Activated CD4-positive, alpha-beta T cell treated with anti-CD3 and anti-CD28 coated beads, Interleukin-2, amount 10 ng/mL, durations not matched to agents 24 days and 14 days (primary cell): ENCODE measurements at regions of chr12 and their contacts with region 1.

Region 1: DNA sequence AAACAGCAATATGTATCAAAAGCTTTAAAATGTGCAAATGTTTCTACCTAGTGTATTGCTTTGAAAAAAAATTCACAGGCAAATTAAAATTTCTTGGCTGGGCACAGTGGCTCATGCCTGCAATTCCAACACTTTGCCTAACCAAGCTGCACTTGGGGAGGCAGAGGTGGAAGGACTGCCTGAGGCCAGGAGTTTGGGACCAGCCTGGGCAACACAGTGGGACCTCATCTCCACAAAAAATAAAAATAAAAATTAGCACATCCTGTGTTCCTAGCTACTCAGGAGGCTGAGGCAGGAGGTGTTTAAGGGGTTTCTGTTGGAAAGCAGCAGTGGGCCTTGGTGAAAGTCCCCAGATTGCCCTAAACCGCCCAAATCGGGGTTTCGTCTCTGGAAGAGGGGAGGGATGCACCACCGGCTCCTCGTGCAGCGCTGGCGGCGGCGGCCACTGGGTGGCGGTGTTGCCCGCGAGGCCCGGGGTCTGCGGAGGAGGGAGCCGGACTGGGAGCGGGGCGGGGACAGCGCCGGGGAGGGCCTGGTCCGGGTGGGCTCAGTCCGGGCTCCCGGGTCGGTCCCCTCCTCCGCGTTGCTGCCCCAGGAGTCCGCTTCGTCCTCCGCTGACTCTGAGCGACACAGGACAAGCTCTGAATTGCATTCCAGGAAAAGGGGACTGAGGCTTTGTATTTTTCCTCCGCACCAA is 265.6 kb downstream of the AACS start:
- DNase-seq: peak; percentile 87
- H3K4me3 Mint-ChIP-seq: no peak overlapping the region
- H3K27ac Mint-ChIP-seq: no peak overlapping the region
- H3K4me1 Mint-ChIP-seq: no peaks in the 10 kb centered on the region
- H3K27me3 Mint-ChIP-seq: peaks cover 11% of the 10 kb centered on the region

Region 2: DNA sequence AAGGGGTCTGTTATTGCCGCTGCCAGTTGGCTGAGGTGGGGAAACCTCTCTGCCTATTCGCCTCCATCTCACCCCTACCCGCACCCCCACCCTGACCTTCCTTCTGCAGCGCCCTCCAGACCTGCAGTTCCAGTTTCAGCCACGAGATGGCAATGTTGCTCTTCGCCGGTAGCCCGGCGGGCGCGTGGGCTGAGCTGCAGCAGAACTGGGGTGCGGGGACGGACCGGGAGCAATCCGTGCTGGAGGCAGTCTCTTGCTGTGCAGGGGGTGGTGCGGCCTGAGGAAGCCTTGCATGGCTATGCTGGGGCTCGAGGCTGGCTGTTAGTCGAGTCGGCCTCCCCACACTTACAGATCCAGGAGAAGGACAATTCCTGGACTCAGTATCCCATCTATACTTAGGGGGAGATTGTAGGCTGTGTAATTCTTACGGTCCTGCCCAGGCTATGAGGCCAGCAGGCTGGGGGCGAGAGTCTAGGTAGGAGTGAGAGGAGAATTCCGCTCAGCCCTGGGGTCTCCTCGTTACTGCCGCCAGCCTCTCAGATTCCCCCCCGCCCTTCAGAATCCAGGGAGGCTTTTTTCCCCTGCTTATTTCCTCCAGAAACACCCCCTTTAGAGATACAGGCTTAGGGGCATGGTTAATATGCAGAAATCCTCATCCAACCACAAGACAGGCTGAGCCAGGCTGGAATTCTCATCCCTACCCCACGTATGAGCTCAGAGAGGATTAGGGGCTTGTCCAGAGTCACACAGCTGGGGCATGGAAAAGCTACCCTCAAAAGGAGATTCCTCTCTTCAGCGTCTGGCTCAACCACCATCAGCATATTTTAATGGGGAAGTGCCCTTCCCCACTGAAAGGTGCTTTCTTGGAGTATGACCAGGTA is 147.4 kb before region 1 on chr12:
- intact Hi-C with region 1: loop called (anchors 5 kb)
- DNase-seq: peak; percentile 95
- H3K4me3 Mint-ChIP-seq: no peak overlapping the region
- H3K27ac Mint-ChIP-seq: no peak overlapping the region
- H3K4me1 Mint-ChIP-seq: peaks cover 11% of the 10 kb centered on the region
- H3K27me3 Mint-ChIP-seq: peaks cover 45% of the 10 kb centered on the region

Region 3: GRCh38 chr12:125402874-125403789 is 72.3 kb after region 1 on chr12:
- intact Hi-C with region 1: loop called (anchors 2 kb)
- DNase-seq: peak; percentile 75
- H3K4me3 Mint-ChIP-seq: no peak overlapping the region
- H3K27ac Mint-ChIP-seq: no peak overlapping the region
- H3K4me1 Mint-ChIP-seq: peaks cover 3% of the 10 kb centered on the region
- H3K27me3 Mint-ChIP-seq: peaks cover 6% of the 10 kb centered on the region